IMR-90 (cell line): ENCODE measurements at regions of chr15 and their contacts with region 1.

Region 1: GRCh38 chr15:22831473-22831872 is 7.0 kb upstream of the NIPA2 start:
- DNase-seq: peak; percentile 53
- ATAC-seq: peak; percentile 37; the same call in 1 of the 2 replicates
- H3K4me3 ChIP-seq: no peak overlapping the region
- H3K27ac ChIP-seq: no peak overlapping the region
- H3K4me1 ChIP-seq: no peaks in the 10 kb centered on the region
- H3K27me3 ChIP-seq: no peaks in the 10 kb centered on the region
- CTCF ChIP-seq: no peak
- POLR2A ChIP-seq: no peak
- RAD21 ChIP-seq: no peak

Region 2: DNA sequence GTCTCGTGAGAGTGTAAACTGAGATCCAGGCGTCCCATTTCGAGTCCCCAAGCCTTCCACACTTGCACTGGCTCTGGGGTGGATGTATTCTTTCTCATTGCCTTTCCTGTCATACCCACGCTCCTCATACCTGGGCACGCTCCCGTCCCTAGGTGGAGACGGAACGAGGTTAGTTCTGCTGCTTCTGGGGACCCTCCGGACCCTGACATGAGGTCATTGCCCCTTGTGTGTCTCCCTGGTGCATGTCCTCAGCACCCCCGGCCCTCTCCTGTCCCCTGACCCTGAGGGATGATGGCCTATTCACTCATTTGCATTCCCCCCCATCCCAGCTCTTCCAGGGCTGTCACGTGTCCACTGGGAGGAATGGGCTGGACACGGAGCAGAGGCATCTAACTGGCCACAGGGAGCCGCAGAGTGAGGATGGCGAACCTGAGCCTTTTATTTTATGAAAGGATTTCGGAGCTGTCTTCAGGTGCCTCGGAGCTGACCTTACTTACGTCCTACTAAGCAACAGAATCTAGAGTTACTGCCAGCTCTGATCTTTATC is 36.8 kb before region 1 on chr15:
- CTCF ChIA-PET with region 1: no interaction called
- POLR2A ChIA-PET with region 1: no interaction called
- dilution Hi-C with region 1: no loop called
- in situ Hi-C with region 1: loop called (anchors 5 kb)
- intact Hi-C with region 1: no loop called
- DNase-seq: no peak
- ATAC-seq: no peak
- H3K4me3 ChIP-seq: no peak overlapping the region
- H3K27ac ChIP-seq: no peak overlapping the region
- H3K4me1 ChIP-seq: no peaks in the 10 kb centered on the region
- H3K27me3 ChIP-seq: no peaks in the 10 kb centered on the region
- CTCF ChIP-seq: no peak
- POLR2A ChIP-seq: no peak
- RAD21 ChIP-seq: no peak

Region 3: GRCh38 chr15:23457890-23458289 is 626.4 kb after region 1 on chr15:
- CTCF ChIA-PET with region 1: no interaction called
- POLR2A ChIA-PET with region 1: no interaction called
- dilution Hi-C with region 1: no loop called
- in situ Hi-C with region 1: no loop called
- intact Hi-C with region 1: no loop called
- DNase-seq: no peak
- ATAC-seq: no peak
- H3K4me3 ChIP-seq: no peak overlapping the region
- H3K27ac ChIP-seq: no peak overlapping the region
- H3K4me1 ChIP-seq: no peaks in the 10 kb centered on the region
- H3K27me3 ChIP-seq: no peaks in the 10 kb centered on the region
- CTCF ChIP-seq: no peak
- POLR2A ChIP-seq: no peak
- RAD21 ChIP-seq: no peak